Activated T-helper 1 cell treated with anti-CD3 and anti-CD28 coated beads, Interleukin-12 subunit alpha, Interleukin-12 subunit beta, Interleukin-2, Interleukin-4 antibody, amounts not matched to agents 30 ng/mL and 10 ng/mL and 1 ng/mL, durations not matched to agents 14 hours and 24 hours and 36 hours (primary cell): ENCODE measurements at regions of chr5 and their contacts with region 1.

Region 1: DNA sequence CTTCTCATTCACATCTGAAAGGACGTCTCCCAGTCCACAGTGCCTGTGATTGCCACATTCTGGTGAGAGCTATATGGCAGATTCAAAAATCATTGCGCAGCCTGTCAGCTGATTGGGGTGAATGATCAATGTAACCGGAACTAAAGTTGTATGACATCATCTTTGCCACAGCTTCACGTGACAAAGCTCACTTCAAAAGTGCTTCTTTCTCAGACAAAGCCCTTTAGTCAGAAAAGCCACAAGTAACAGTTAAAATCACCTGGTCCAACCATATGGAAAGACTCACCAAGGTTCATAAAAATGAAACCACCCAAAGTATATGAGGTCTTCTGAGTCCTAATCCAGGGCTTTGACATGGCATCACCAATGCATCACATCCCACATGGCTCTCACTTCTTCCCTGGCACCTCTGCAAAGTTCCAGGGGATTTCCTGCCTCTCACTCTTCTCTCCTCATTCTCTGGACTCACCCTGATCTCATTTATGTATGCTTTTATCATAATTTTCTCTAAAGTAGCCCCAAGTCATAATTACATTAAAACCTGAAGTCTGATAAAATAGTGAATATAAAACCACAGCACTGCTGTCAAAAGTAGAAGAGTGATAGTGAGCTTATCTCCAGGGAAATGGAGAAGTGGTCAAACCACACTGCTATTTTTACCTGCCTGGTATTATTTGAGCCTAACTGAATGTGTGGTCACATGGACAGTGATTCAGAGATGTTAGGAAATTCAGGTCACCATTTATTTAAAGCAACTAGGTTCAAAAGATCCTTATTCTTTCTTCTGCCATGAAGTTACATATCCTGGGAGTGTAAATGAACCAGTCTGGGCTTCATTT is 193.1 kb upstream of the PTGER4 start:
- DNase-seq: peak; percentile 63
- H3K4me3 Mint-ChIP-seq: peak overlapping the region; percentile 23
- H3K27ac Mint-ChIP-seq: peak overlapping the region; percentile 83
- H3K4me1 Mint-ChIP-seq: peaks cover 79% of the 10 kb centered on the region
- H3K27me3 Mint-ChIP-seq: no peaks in the 10 kb centered on the region

Region 2: GRCh38 chr5:39948867-39949468 is 537.7 kb before region 1 on chr5:
- intact Hi-C with region 1: loop called (anchors 2 kb)
- DNase-seq: peak; percentile 46
- H3K4me3 Mint-ChIP-seq: no peak overlapping the region
- H3K27ac Mint-ChIP-seq: peak overlapping the region; percentile 7
- H3K4me1 Mint-ChIP-seq: peaks cover 6% of the 10 kb centered on the region
- H3K27me3 Mint-ChIP-seq: peaks cover 5% of the 10 kb centered on the region

Region 3: DNA sequence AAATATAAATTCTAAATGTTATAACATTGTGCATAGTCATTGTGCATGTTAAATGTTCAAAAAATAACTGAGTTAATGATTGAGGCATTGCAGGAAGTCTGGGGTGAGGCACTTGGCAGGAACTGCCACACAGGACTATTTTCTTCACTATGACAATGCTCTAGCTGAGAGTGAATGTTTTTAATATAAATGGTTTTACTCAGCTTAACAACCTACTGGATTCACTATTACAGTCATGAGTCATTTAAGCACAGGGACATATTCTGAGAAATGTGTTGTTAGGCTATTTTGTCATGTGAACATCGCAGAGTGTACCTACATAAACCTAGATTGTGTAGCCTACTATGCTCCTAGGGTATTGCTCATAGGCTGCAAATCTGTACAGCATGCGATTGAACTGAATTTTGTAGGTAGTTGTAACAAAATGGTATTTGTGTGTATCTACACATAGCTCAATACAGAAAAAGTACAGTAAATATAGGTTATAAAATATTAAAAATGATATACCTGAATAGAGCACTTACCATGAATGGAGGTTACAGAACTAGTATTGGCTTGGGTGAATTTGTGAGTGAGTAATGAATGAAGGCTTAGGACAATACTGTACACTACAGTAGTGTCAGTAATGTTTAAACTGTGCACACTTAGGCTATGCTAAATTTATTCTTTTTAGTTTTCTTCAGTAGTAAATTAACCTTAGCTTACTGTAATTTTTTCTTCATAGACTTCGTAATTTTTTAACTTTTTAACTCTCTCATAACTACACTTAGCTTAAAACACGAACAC is 153.0 kb before region 1 on chr5:
- intact Hi-C with region 1: loop called (anchors 1 kb)
- DNase-seq: no peak
- H3K4me3 Mint-ChIP-seq: no peak overlapping the region
- H3K27ac Mint-ChIP-seq: peak overlapping the region; percentile 27
- H3K4me1 Mint-ChIP-seq: peaks cover 43% of the 10 kb centered on the region
- H3K27me3 Mint-ChIP-seq: no peaks in the 10 kb centered on the region

Region 4: GRCh38 chr5:40404613-40405012 is 82.0 kb before region 1 on chr5:
- intact Hi-C with region 1: loop called (anchors 1 kb)
- DNase-seq: peak; percentile 12
- H3K4me3 Mint-ChIP-seq: peak overlapping the region; percentile 59
- H3K27ac Mint-ChIP-seq: peak overlapping the region; percentile 99
- H3K4me1 Mint-ChIP-seq: peaks cover 86% of the 10 kb centered on the region
- H3K27me3 Mint-ChIP-seq: no peaks in the 10 kb centered on the region

Region 5: GRCh38 chr5:40428126-40428525 is 58.5 kb before region 1 on chr5:
- intact Hi-C with region 1: loop called (anchors 2 kb)
- DNase-seq: no peak
- H3K4me3 Mint-ChIP-seq: no peak overlapping the region
- H3K27ac Mint-ChIP-seq: no peak overlapping the region
- H3K4me1 Mint-ChIP-seq: peaks cover 43% of the 10 kb centered on the region
- H3K27me3 Mint-ChIP-seq: no peaks in the 10 kb centered on the region

Region 6: DNA sequence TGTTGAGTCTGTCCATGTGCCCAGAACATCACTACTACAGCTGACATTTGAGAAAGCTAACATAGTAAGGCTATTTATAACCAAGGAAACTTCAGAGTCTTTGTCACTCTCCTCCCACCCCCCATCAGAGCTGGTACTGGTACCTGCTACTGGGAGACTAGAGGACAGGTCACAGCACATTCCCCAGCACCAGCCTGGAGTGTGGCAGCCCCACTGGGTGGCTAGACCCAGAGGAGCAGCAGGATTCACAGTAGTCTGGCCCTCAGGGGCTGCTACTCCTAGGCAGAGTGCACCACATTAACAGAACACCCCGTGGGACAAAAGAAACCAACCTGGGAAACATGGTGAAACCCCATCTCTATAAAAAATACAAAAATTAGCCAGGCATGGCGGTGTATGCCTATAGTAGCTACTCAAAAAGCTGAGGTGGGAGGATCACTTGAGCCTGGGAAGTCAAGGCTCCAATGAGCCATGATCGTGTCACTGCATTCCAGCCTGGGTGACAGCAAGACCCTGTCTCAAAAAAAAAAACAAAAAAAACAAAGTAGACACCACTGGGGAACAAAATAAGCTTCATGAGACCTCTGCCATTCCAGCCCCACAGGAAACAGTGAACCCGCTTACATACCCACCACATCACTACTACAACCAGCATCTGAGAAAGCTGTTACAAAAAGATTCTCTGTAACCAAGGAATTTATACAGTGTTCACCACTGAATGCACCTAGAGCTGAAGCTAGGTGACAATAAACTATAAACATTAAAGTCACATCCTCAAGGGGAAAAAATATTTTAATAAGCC is 166.8 kb after region 1 on chr5:
- intact Hi-C with region 1: loop called (anchors 1 kb)
- DNase-seq: no peak
- H3K4me3 Mint-ChIP-seq: peak overlapping the region; percentile 85
- H3K27ac Mint-ChIP-seq: peak overlapping the region; percentile 95
- H3K4me1 Mint-ChIP-seq: peaks cover 93% of the 10 kb centered on the region
- H3K27me3 Mint-ChIP-seq: no peaks in the 10 kb centered on the region

Region 7: GRCh38 chr5:40736103-40736875 is 249.6 kb after region 1 on chr5:
- intact Hi-C with region 1: loop called (anchors 2 kb)
- DNase-seq: no peak
- H3K4me3 Mint-ChIP-seq: no peak overlapping the region
- H3K27ac Mint-ChIP-seq: no peak overlapping the region
- H3K4me1 Mint-ChIP-seq: peaks cover 22% of the 10 kb centered on the region
- H3K27me3 Mint-ChIP-seq: no peaks in the 10 kb centered on the region

Region 8: GRCh38 chr5:41048986-41049385 is 562.3 kb after region 1 on chr5:
- intact Hi-C with region 1: no loop called
- DNase-seq: no peak
- H3K4me3 Mint-ChIP-seq: no peak overlapping the region
- H3K27ac Mint-ChIP-seq: no peak overlapping the region
- H3K4me1 Mint-ChIP-seq: no peaks in the 10 kb centered on the region
- H3K27me3 Mint-ChIP-seq: no peaks in the 10 kb centered on the region